ENCODE measurements at regions of chr9 and their contacts with region 1.

Region 1: DNA sequence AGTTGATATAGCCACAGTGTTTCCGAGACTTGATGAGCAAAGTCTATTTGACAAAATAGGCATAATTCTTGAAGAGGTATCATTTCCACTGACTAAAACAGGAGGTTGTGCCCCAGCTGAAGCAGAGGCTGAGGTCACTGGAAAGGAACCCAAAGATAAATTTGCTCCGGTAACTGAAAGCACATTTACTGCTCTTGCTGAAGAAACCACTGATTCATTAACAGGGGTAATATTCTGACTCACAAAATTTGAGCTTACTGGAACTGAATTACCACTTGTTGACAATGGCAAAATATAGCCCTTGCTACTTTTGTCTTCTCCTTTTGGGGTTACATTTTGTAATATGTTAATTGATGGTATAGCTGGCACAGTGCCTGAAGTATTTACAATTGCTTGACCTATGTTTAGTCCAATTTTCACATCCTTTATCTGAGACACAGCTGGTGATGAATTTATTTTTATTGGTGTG is 30.2 kb downstream of the MLANA start:
- DNase-seq: peak; percentile 66
- ATAC-seq: peak; percentile 91
- H3K4me3 ChIP-seq: no peak overlapping the region
- H3K27ac ChIP-seq: no peak overlapping the region
- H3K4me1 ChIP-seq: no peaks in the 10 kb centered on the region; the same call in 1 of the 2 replicates
- H3K27me3 ChIP-seq: no peaks in the 10 kb centered on the region
- CTCF ChIP-seq: no peak
- EP300 ChIP-seq: peak; percentile 87 to 94; a peak in 3 of 4 replicates
- POLR2A ChIP-seq: no peak
- RAD21 ChIP-seq: no peak

Region 2: GRCh38 chr9:5832543-5833529 is 88.1 kb before region 1 on chr9 and contains the start of gene ERMP1:
- CTCF ChIA-PET with region 1: interaction called, 3 read pairs
- POLR2A ChIA-PET with region 1: interaction called, 4 read pairs
- RAD21 ChIA-PET with region 1: no interaction called
- SMC1A ChIA-PET with region 1: interaction called, 17 read pairs
- in situ Hi-C with region 1: no loop called
- intact Hi-C with region 1: no loop called
- DNase-seq: no peak
- ATAC-seq: peak; percentile 85
- H3K4me3 ChIP-seq: peak within 1 kb of the TSS; percentile 97
- H3K27ac ChIP-seq: peak within 1 kb of the TSS; percentile 70
- H3K4me1 ChIP-seq: peaks cover 5% of the 10 kb centered on the region; the same call in 1 of the 2 replicates
- H3K27me3 ChIP-seq: no peaks in the 10 kb centered on the region
- CTCF ChIP-seq: peak; percentile 85 to 97 (median 89); a peak in 5 of 6 replicates
- EP300 ChIP-seq: no peak
- POLR2A ChIP-seq: peak; percentile 91
- RAD21 ChIP-seq: peak; percentile 62
- polyA plus RNA-seq, gene ERMP1: 2.4 to 2.7 TPM

Region 3: GRCh38 chr9:5899292-5899691 is 21.6 kb before region 1 on chr9:
- CTCF ChIA-PET with region 1: interaction called, 5 read pairs
- POLR2A ChIA-PET with region 1: no interaction called
- RAD21 ChIA-PET with region 1: interaction called, 3 read pairs
- SMC1A ChIA-PET with region 1: interaction called, 19 read pairs
- in situ Hi-C with region 1: no loop called
- intact Hi-C with region 1: no loop called
- DNase-seq: no peak
- ATAC-seq: peak; percentile 42; the same call in 1 of the 3 replicates
- H3K4me3 ChIP-seq: no peak overlapping the region
- H3K27ac ChIP-seq: no peak overlapping the region
- H3K4me1 ChIP-seq: no peaks in the 10 kb centered on the region
- H3K27me3 ChIP-seq: no peaks in the 10 kb centered on the region
- CTCF ChIP-seq: peak; percentile 32 to 36 (median 35); a peak in 3 of 6 replicates
- EP300 ChIP-seq: no peak
- POLR2A ChIP-seq: no peak
- RAD21 ChIP-seq: peak; percentile 46

Region 4: GRCh38 chr9:5939530-5939929 is 18.6 kb after region 1 on chr9:
- CTCF ChIA-PET with region 1: no interaction called
- POLR2A ChIA-PET with region 1: interaction called, 5 read pairs
- RAD21 ChIA-PET with region 1: interaction called, 115 read pairs
- SMC1A ChIA-PET with region 1: interaction called, 109 read pairs
- in situ Hi-C with region 1: no loop called
- intact Hi-C with region 1: no loop called
- DNase-seq: no peak
- ATAC-seq: no peak
- H3K4me3 ChIP-seq: no peak overlapping the region
- H3K27ac ChIP-seq: no peak overlapping the region
- H3K4me1 ChIP-seq: no peaks in the 10 kb centered on the region
- H3K27me3 ChIP-seq: no peaks in the 10 kb centered on the region
- CTCF ChIP-seq: no peak
- EP300 ChIP-seq: no peak
- POLR2A ChIP-seq: no peak
- RAD21 ChIP-seq: no peak

Region 5: GRCh38 chr9:5958273-5958672 is 37.4 kb after region 1 on chr9:
- CTCF ChIA-PET with region 1: interaction called, 7 read pairs
- POLR2A ChIA-PET with region 1: interaction called, 4 read pairs
- RAD21 ChIA-PET with region 1: interaction called, 10 read pairs
- SMC1A ChIA-PET with region 1: interaction called, 58 read pairs
- in situ Hi-C with region 1: no loop called
- intact Hi-C with region 1: no loop called
- DNase-seq: peak; percentile 19
- ATAC-seq: peak; percentile 87
- H3K4me3 ChIP-seq: no peak overlapping the region
- H3K27ac ChIP-seq: no peak overlapping the region
- H3K4me1 ChIP-seq: peaks cover 4% of the 10 kb centered on the region; the same call in 1 of the 2 replicates
- H3K27me3 ChIP-seq: no peaks in the 10 kb centered on the region
- CTCF ChIP-seq: no peak
- EP300 ChIP-seq: peak in 1 of 2 experiments; percentile 68; a peak in 1 of 4 replicates
- POLR2A ChIP-seq: no peak
- RAD21 ChIP-seq: no peak

Region 6: DNA sequence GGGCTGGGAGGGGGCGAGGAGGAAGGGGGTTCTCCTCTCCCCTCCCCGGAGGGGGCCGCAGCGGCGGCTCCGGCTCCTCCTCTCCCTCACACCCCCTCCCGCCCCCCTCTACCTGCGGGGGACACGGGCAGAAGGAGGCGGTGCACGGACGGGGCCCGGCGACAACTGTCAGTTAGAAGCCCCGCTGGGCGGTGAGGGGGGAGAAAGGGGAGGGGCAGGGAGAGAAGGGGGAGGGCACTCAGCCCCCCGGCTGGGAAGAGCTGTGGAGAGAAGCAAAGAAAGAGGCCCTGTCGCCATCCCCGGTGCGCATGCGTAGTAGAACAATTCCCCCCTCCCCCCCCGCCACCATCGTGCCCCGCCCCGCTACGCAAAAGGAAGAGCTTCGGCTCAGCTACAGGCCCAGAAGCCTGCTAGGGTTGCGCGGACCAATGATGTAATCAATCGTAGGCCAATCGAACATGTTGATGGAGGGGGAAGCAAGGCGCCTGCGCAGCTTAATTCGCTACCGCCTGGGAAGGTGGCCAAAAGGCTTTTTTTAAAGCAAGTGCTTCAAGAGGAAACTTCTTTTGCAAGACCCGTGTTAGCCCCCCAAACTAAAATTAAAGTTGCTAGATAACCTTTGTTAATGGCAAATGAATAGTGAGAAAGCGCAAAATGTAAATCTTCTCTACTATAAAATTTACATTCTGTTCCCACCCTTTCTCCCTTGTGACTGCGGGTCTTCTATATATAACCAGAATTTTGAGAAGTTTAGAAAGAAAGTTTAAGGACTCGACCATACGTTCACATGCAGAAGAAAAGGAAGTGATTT is 87.5 kb after region 1 on chr9:
- CTCF ChIA-PET with region 1: interaction called, 5 read pairs
- POLR2A ChIA-PET with region 1: interaction called, 4 read pairs
- RAD21 ChIA-PET with region 1: interaction called, 18 read pairs
- SMC1A ChIA-PET with region 1: interaction called, 5 read pairs
- in situ Hi-C with region 1: no loop called
- intact Hi-C with region 1: no loop called
- DNase-seq: peak; percentile 88
- ATAC-seq: peak; percentile 74
- H3K4me3 ChIP-seq: peak overlapping the region; percentile 82
- H3K27ac ChIP-seq: peak overlapping the region; percentile 66
- H3K4me1 ChIP-seq: peaks cover 12% of the 10 kb centered on the region
- H3K27me3 ChIP-seq: no peaks in the 10 kb centered on the region
- CTCF ChIP-seq: no peak
- EP300 ChIP-seq: no peak
- POLR2A ChIP-seq: peak; percentile 55
- RAD21 ChIP-seq: no peak

Region 7: GRCh38 chr9:6243746-6244145 is 322.9 kb after region 1 on chr9:
- CTCF ChIA-PET with region 1: no interaction called
- POLR2A ChIA-PET with region 1: no interaction called
- RAD21 ChIA-PET with region 1: no interaction called
- SMC1A ChIA-PET with region 1: no interaction called
- in situ Hi-C with region 1: no loop called
- intact Hi-C with region 1: no loop called
- DNase-seq: peak; percentile 48
- ATAC-seq: peak; percentile 90
- H3K4me3 ChIP-seq: no peak overlapping the region
- H3K27ac ChIP-seq: no peak overlapping the region
- H3K4me1 ChIP-seq: no peaks in the 10 kb centered on the region
- H3K27me3 ChIP-seq: no peaks in the 10 kb centered on the region
- CTCF ChIP-seq: no peak
- EP300 ChIP-seq: 0 out of 4 replicates have a peak, but pooled peaks of 1 of the 2 experiments have one; percentile 31
- POLR2A ChIP-seq: no peak
- RAD21 ChIP-seq: no peak